ENCODE measurements at regions of chr11 and their contacts with region 1.

Region 1: DNA sequence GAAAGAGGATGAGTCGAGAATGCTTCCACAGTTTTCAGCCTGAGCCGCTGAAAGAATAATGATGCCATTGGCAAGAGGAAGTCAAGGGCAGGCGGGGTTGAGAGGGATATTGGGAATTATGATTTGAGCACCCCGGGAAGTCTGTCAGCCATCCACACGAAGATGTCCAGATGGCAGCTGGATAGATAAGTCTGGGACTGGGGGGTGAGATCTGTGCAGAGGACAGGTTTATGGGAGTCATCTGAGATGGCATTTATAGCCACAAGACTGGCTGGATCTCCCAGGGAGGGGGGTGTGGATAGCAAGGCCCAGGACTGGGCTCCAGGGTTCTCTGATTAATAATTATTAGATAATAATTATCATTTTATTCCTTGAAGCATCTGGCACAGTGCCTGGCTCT is 5.1 kb upstream of the STIP1 start:
- DNase-seq: no peak
- ATAC-seq: no peak
- H3K4me3 ChIP-seq: peak overlapping the region in 7 of 10 donors; percentile 6 to 44 (median 37)
- H3K27ac ChIP-seq: peak overlapping the region; percentile 52 to 91 (median 82)
- H3K4me1 ChIP-seq: peaks cover 12 to 53% (median 44%) of the 10 kb centered on the region in 9 donors
- H3K27me3 ChIP-seq: no peaks in the 10 kb centered on the region
- CTCF ChIP-seq: no peak

Region 2: DNA sequence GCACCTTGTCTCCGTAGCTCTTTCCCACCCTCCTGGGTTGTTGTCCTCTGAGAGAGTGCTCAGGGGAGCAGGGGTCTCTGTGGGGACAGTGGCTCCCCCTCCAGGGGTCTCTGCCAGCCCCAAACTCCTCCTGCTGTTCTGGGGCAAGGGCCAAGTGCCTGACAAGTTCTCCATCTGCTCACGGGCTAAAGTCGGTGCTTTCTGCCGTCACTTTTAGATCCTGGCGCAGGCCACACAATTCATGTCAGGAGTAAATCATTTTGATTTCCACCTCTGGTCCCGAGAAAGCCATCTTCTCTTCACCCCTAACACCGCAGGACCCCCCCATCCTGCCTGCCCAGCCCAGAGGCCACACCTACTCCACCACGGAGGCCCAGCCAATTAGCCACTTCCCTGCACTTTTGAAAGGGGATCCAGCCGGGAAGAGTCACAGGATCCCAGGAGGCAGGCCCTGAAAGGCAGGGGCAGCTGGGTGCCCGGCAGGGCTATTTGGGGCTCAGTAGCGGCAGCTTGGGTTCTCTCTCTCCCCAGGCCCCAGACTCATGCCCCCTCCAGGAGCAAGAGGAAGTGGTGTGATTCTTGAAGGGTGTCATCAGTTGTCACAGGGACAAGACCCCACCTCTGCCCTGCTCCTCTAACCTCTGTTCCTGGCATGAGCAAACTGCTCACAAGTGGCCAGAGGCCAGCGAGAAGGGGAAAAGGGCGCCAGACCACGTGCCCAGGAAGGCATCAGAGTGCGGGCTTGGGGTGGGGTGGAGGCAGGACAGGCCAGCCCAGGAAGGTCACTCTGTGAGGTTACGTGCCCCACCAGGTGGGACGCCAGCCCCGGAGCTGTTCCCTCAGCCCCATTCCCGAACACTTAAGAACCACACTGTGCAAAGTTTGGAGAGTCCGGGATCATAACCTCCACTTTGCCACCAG is 16.2 kb before region 1 on chr11:
- intact Hi-C with region 1: loop called in 1 of 10 experiments (anchors 1 kb)
- DNase-seq: peak in 1 of 2 donors; percentile 65
- ATAC-seq: peak; percentile 17 to 71 (median 62)
- H3K4me3 ChIP-seq: peak overlapping the region in 9 of 10 donors; percentile 69 to 97 (median 82)
- H3K27ac ChIP-seq: peak overlapping the region; percentile 66 to 91 (median 85)
- H3K4me1 ChIP-seq: peaks cover 3 to 24% (median 22%) of the 10 kb centered on the region in 9 donors
- H3K27me3 ChIP-seq: no peaks in the 10 kb centered on the region
- CTCF ChIP-seq: no peak

Measured in heart right ventricle (tissue), 16 donors.